ENCODE measurements at regions of chr17 and their contacts with region 1.

Region 1: GRCh38 chr17:29777663-29778062 is 152.4 kb downstream of the SSH2 start:
- DNase-seq: no peak
- H3K4me3 ChIP-seq: no peak overlapping the region
- H3K27ac ChIP-seq: no peak overlapping the region
- H3K4me1 ChIP-seq: no peaks in the 10 kb centered on the region; the same call in 1 of the 2 replicates
- H3K27me3 ChIP-seq: no peaks in the 10 kb centered on the region
- CTCF ChIP-seq: no peak

Region 2: GRCh38 chr17:29369831-29370735 is 407.6 kb before region 1 on chr17:
- CTCF ChIA-PET with region 1: interaction called, 12 read pairs
- POLR2A ChIA-PET with region 1: no interaction called
- intact Hi-C with region 1: no loop called
- DNase-seq: peak; percentile 61 to 71
- H3K4me3 ChIP-seq: peak overlapping the region; percentile 10; the same call in 1 of the 2 replicates
- H3K27ac ChIP-seq: no peak overlapping the region
- H3K4me1 ChIP-seq: peaks cover 11% of the 10 kb centered on the region
- H3K27me3 ChIP-seq: no peaks in the 10 kb centered on the region
- CTCF ChIP-seq: peak; percentile 89

Region 3: DNA sequence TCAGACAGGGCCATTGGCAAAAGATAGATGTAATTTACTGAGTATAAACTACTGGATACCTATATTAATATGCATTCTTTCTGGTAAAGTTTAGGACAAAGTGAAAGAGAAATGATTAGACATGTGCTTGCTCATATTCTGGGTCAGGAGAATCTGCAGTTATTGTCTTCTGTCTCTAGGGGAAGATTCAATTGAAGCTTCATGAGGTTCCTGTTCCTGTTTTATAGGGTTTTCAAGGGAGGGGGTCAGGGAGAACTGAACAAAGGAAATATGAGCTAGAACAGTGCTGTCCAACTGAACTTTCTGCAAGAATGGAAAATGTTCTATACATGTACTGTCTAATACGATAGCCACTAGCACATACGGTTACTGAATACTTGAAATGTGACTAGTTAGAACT is 95.6 kb before region 1 on chr17:
- CTCF ChIA-PET with region 1: interaction called, 6 read pairs
- POLR2A ChIA-PET with region 1: interaction called, 37 read pairs
- intact Hi-C with region 1: no loop called
- DNase-seq: no peak
- H3K4me3 ChIP-seq: no peak overlapping the region
- H3K27ac ChIP-seq: no peak overlapping the region
- H3K4me1 ChIP-seq: no peaks in the 10 kb centered on the region
- H3K27me3 ChIP-seq: no peaks in the 10 kb centered on the region
- CTCF ChIP-seq: no peak

Region 4: DNA sequence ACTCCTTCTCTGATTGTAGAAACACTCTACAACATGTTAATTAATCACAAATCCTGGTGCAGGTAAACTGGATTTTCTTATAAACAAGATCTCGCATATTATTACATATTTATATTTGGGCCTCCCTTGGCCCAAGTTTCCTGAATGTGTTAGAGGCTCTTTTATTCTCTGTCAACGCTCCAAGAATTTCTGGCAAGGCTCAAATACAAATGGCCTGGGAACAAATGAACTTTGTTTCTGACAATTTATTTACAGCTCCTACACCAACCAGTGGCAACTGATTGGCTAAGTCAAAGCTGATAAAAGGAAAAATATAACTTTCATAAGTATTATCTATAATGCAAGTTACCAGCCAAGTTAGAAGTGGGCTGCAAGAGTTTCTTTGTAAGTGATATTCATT is 90.1 kb before region 1 on chr17:
- CTCF ChIA-PET with region 1: interaction called, 19 read pairs
- POLR2A ChIA-PET with region 1: no interaction called
- intact Hi-C with region 1: no loop called
- DNase-seq: no peak
- H3K4me3 ChIP-seq: no peak overlapping the region
- H3K27ac ChIP-seq: no peak overlapping the region
- H3K4me1 ChIP-seq: peaks cover 9% of the 10 kb centered on the region
- H3K27me3 ChIP-seq: no peaks in the 10 kb centered on the region
- CTCF ChIP-seq: no peak

Region 5: GRCh38 chr17:29710891-29711418 is 66.7 kb before region 1 on chr17:
- CTCF ChIA-PET with region 1: no interaction called
- POLR2A ChIA-PET with region 1: no interaction called
- intact Hi-C with region 1: loop called (anchors 2 kb)
- DNase-seq: peak; percentile 77 to 96
- H3K4me3 ChIP-seq: peak overlapping the region; percentile 9; the same call in 1 of the 2 replicates
- H3K27ac ChIP-seq: peak overlapping the region; percentile 81
- H3K4me1 ChIP-seq: peaks cover 40% of the 10 kb centered on the region
- H3K27me3 ChIP-seq: no peaks in the 10 kb centered on the region
- CTCF ChIP-seq: no peak; the same call in 1 of the 2 replicates

Measured in PC-9 (cell line).